SK-N-SH (cell line): ENCODE measurements at regions of chr22 and their contacts with region 1.

Region 1: DNA sequence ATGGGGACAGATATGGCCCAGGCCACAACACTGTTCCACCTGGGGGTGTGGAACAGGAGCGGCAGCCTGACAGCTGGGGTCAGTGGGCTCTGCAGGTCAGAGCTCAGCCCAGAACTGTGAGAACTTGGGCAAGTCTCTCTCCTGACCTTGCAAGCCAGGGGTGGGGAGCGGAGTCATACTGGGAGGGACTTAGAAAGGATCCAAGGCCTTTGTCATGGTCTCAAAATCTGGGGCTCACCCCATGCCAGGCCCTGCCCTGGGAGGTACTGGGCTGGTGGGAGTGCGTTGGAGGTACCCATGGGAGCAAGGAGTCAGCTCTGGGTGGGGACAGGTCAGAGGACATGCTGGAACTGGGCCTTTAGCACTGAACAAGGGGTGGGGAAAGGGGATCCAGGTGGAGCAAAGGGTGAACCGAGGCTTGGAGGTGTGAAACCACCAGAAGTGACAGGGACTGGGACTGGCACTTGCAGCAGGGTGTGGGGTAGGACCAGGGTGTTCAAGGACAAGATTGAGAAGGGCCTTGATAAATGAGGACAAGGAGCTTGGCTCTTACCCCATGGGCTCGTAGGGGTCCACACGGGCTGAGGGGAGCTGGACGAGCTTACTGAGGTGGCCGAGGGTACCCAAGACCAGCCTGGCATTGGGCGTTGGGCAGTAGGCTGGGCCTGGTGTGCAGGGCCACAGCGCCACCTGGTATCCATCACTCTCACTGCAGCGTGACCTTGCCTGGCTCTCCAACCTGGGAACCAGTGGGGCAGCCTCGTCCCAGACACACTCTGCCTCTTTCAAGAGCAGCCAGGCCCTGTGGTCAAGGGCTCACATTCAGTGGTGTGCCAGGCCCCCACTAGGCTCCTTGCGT is 7.4 kb upstream of the PMM1 start:
- DNase-seq: peak; percentile 76
- H3K4me3 ChIP-seq: no peak overlapping the region; a peak in 1 of 4 replicates
- H3K27ac ChIP-seq: peak overlapping the region; percentile 53 to 65; a peak in 3 of 4 replicates
- H3K4me1 ChIP-seq: peaks cover 5 to 14% of the 10 kb centered on the region in 2 experiments; a peak in 2 of 4 replicates
- H3K27me3 ChIP-seq: no peaks in the 10 kb centered on the region
- CTCF ChIP-seq: peak; percentile 63
- EP300 ChIP-seq: no peak
- RAD21 ChIP-seq: peak; percentile 78

Region 2: DNA sequence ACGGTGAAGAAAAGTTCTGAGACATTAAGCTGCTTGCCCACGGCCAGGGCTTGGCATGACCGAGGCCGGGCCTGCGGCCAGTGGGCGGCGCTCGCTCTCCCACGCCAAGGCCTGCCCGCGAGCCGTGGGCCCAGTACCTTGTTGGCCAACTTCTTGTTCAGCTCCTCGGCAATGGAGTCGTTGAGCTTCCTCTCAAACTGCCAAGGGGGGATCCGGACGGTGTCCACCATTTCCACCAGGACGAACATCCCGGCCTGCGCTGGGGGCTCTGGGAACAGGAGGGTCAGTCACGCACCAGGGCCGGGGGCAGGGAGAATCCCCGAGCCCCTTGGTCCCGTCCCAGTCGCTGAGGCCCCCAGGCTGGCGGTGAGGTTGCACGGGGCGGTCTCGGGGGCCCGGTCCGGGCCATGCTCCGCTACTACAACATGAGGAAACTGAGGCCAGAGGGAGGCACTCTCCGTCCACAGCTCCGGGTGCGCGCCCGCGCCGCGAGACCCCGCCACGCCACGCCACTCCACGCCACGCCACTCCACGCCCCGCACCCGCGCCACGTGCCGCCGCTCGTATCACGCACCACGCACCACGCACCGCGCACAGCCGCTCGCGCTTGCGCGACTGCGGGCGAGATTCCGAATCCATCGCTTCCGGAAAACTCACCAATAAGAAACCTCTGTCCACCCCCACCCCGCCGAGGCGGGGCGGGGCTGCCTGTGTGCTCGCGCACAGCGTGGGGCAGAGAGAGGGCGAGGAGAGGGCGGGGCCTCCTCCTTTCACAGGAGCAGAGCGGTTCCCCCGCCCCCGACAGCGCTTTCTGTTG is 52.9 kb before region 1 on chr22 and contains the start of gene POLR3H:
- CTCF ChIA-PET with region 1: interaction called, 35 read pairs
- POLR2A ChIA-PET with region 1: interaction called, 3 read pairs
- DNase-seq: peak; percentile 93
- H3K4me3 ChIP-seq: peak within 1 kb of the TSS; percentile 67 to 69
- H3K27ac ChIP-seq: peak within 1 kb of the TSS; percentile 53 to 71
- H3K4me1 ChIP-seq: peaks cover 4 to 8% of the 10 kb centered on the region in 2 experiments; a peak in 2 of 4 replicates
- H3K27me3 ChIP-seq: no peaks in the 10 kb centered on the region
- CTCF ChIP-seq: peak; percentile 62
- EP300 ChIP-seq: no peak
- RAD21 ChIP-seq: peak; percentile 50
- polyA plus RNA-seq, gene POLR3H: 22.9 and 25.8 TPM in 2 replicates

Region 3: GRCh38 chr22:41576877-41577276 is 20.1 kb before region 1 on chr22:
- CTCF ChIA-PET with region 1: interaction called, 10 read pairs
- POLR2A ChIA-PET with region 1: no interaction called
- DNase-seq: peak; percentile 58
- H3K4me3 ChIP-seq: no peak overlapping the region
- H3K27ac ChIP-seq: no peak overlapping the region
- H3K4me1 ChIP-seq: no peaks in the 10 kb centered on the region; a peak in 1 of 4 replicates
- H3K27me3 ChIP-seq: no peaks in the 10 kb centered on the region
- CTCF ChIP-seq: peak; percentile 39
- EP300 ChIP-seq: no peak
- RAD21 ChIP-seq: peak; percentile 50

Region 4: DNA sequence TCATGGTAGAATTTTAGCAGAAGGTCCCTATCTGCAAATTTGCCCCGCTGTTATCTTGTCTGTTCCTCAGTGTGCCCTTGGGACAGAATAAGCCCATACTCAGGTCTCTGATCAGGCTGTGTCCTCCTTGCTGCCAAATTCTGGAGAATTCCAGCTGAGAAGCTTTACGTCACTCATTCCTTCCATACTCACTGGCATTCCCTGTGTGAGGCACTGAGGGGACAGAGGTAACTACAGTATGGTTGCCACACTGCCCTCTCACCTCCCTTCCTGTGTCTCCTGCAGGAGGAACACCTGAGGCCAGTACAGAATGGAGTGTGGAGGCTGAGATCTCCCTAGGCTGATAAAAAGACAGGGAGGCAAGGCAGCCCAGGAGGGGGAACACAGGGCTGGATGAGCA is 286.4 kb after region 1 on chr22:
- CTCF ChIA-PET with region 1: no interaction called
- POLR2A ChIA-PET with region 1: no interaction called
- DNase-seq: no peak
- H3K4me3 ChIP-seq: no peak overlapping the region
- H3K27ac ChIP-seq: no peak overlapping the region
- H3K4me1 ChIP-seq: no peaks in the 10 kb centered on the region
- H3K27me3 ChIP-seq: no peaks in the 10 kb centered on the region
- CTCF ChIP-seq: no peak
- EP300 ChIP-seq: no peak
- RAD21 ChIP-seq: no peak